ENCODE measurements at regions of chr3 and their contacts with region 1.

Region 1: GRCh38 chr3:48400824-48401433 is 28.9 kb downstream of the FBXW12 start:
- DNase-seq: peak; percentile 86
- CTCF ChIP-seq: peak; percentile 81

Region 2: DNA sequence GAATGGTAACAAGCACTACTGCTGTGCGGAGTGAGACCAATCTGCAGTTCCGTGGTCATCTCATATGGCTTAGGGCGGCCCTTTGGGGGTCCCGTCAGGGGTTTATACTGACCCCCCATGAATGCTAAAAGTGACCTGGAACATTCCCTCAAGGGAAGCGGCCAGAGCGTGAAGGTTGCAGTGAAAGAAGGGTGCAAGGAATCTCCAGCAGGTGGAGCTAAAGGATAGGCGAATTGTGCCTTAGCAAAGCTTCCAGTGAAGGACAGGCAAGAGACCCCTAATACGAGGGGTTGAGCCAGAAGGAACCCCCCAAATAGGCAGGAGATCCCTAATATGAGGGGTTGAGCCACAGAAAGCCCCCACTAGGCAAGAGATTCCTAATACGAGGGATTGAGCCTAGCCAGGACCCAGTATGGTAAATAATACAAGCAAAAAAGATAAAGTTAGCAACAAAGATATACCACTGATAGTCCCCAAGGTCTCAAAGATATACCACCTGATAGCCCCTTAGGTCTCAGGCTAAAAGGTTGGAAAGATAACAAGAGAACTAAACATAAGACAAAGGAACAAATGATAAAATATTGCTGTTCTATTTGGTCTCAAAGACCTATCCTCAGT is 127.2 kb before region 1 on chr3:
- CTCF ChIA-PET with region 1: interaction called, 34 read pairs
- POLR2A ChIA-PET with region 1: no interaction called
- DNase-seq: peak; percentile 77
- CTCF ChIP-seq: peak; percentile 81

Region 3: GRCh38 chr3:48388966-48389365 is 12.0 kb before region 1 on chr3:
- CTCF ChIA-PET with region 1: interaction called, 16 read pairs
- POLR2A ChIA-PET with region 1: no interaction called
- DNase-seq: no peak
- CTCF ChIP-seq: no peak

Region 4: DNA sequence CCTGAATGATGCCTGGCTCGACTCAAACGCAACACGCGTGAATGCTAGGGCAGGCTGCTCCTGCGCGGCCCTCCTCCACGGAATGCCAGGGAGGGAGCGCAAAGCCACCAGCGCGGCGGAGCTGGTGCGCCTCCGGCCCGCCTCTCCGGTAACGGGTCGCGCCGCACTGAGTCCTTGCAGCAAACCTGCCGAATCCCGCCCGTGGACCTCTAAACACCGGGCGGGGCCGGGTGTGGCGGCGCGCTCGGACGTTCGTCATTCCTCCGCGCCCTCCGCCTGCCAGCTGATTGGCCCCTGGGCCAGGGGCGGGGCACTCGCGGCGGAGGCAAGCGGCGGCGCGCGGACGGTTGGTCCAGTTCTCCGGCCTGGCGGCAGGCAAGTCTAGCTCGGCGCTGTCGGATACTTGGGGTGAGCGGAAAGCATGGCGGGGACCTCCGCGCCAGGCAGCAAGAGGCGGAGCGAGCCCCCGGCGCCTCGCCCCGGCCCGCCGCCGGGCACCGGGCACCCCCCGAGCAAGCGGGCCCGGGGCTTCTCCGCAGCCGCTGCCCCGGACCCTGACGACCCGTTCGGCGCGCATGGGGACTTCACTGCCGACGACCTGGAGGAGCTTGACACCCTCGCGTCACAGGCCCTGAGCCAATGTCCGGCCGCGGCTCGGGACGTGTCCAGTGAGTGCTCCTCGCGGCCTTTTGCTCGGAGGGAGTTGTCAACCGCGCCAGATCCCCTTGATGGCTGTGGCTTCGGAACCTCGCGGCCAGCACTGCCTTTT is 45.7 kb after region 1 on chr3 and contains the start of gene ATRIP:
- CTCF ChIA-PET with region 1: interaction called, 863 read pairs
- POLR2A ChIA-PET with region 1: no interaction called
- DNase-seq: peak; percentile 96
- CTCF ChIP-seq: no peak

Region 5: DNA sequence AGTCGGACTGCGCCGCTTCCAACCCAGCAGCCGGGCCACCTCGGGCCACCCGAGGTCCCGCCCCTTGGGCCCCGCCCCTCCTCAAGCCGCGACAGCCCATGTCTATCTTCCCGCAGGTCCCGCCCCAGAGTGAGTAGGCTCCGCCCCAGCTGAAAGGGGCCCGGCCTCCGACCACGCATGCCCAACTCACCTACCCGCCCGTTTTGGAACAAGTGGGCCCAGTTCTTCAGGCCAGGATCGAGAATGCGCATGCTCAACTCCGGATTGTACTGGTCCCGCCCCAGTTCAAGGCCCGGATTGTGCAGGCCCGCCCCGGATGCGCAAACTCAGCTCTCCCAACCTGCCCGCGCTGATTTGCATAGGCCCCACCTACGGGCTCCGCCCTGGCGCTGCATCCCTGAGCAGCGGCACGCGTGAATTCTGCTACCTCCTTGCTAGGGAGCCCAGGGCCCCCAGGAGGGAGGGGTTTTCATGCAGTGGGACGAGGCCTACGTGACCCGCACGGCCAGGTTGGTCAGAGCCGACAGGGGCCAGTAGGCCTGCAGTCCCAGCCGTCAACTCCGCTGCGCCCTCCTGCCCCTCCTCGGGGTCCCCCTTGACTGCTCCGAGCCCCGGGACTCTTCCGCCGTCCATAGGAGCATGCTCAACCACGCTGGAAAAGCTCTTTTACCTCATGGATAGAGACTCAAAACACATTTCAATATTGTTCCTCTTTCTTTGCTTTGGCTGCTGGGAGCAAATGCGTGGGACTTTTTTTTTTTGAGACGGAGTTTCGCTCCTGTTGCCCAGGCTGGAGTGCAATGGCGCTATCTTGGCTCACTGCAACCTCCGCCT is 156.1 kb after region 1 on chr3 and contains the start of gene PFKFB4:
- CTCF ChIA-PET with region 1: interaction called, 36 read pairs
- POLR2A ChIA-PET with region 1: no interaction called
- DNase-seq: peak; percentile 99
- CTCF ChIP-seq: no peak

Region 6: DNA sequence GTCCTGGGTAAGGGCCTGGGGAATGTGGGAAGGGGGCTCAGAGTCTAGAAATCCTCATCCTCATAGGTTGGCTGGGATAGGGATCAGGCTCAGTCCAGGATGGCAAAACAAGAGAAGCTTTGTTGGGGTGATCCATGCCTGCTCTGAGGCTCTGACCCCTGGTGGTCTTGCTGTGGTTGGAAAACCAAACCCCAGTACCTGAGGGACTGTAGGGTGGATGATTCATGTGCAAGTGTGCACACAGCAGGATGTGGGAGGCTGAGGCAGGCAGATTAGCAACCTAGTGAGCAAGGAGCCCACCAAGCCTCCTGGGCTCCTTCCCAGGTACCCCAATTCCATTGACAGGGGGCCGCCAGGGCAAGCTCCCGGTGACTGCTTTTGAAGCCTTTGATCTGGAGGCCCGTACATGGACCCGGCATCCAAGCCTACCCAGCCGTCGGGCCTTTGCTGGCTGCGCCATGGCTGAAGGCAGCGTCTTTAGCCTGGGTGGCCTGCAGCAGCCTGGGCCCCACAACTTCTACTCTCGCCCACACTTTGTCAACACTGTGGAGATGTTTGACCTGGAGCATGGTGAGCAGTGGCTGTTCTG is 773.6 kb after region 1 on chr3:
- CTCF ChIA-PET with region 1: no interaction called
- POLR2A ChIA-PET with region 1: no interaction called
- DNase-seq: no peak
- CTCF ChIP-seq: no peak

Measured in GM10248 (cell line).